H1 (cell line): ENCODE measurements at regions of chr14 and their contacts with region 1.

Region 1: DNA sequence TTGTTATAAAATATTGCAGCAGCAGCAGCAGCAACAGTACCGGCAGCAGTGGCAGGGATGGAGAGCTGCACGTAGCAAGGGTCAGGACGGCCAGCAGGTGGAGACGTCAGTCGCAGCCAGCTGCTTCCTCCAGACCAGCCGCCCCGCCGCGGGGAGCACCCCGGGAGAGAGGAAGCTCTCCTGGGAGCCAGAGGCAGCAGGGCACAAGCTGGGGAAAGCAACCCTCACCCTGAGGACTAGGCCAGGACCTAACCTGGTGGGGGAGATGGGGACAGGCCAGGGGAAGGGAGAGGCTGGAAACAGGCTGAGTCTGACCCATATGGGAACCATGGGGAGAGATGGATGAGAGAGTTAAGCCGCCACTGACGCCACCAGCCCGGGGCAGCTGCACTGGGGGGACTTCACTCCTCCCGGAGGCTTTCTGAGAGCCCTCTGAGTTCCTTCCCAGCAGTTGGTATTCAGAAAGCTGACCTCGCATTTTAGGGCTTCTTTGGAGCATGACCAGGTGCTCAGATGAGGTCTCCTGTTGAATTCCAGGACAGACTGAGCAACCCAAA is 56.3 kb downstream of the SPTB start:
- DNase-seq: peak; percentile 41 to 86
- H3K4me3 ChIP-seq: no peak overlapping the region
- H3K27ac ChIP-seq: no peak overlapping the region
- H3K4me1 ChIP-seq: peaks cover 0 to 13% (median 5%) of the 10 kb centered on the region in 4 experiments; a peak in 4 of 7 replicates
- H3K27me3 ChIP-seq: no peaks in the 10 kb centered on the region; a peak in 1 of 7 replicates
- CTCF ChIP-seq: peak; percentile 78 to 98 (median 82)
- EP300 ChIP-seq: no peak
- POLR2A ChIP-seq: no peak
- RAD21 ChIP-seq: peak; percentile 83 to 85

Region 2: DNA sequence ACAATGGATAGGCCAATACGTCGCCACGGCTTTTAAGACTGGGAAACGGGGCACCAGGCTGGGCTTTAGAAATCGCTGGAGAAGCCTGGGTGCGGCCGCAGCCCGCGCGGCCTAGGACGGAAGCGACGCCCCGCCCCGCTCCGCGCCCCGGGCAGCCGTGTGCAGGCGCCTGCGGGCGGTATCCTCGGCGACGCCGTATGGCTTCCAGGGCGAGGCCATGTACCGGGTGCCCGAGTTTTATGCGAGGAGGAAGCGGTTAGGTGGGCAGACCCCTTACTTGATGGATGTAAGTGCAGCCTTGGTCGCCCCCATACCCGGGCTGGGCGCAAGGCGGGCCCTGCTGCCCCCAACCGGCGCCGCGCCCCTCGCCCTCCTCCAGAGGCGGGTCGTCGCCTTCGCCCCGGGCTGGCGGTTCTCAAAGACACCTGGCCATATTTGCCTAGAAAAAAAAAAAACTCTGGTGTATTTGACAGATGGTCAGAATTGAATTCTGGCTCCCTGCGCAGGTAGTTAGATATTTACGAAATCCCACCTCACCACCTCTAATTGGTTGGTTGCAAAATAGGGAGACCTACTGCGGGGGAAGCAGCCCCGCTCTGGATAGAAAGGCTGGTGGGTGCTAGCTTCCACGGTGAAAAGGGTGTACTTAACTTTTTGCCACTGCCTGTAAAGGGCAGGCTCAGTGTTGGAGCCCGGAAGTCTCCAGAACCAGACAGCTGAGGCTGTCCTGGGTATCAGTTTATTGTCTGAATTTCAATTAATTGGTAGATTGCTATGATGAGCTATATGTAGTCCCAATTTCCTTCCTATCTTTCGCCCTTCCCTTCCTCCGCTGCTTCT is 273.4 kb before region 1 on chr14 and contains the start of gene PPP1R36:
- CTCF ChIA-PET with region 1: no interaction called
- POLR2A ChIA-PET with region 1: no interaction called
- DNase-seq: peak in 1 of 2 experiments; percentile 74
- H3K4me3 ChIP-seq: peak within 1 kb of the TSS; percentile 35 to 64 (median 46); a peak in 7 of 8 replicates
- H3K27ac ChIP-seq: no peak within 1 kb of the TSS
- H3K4me1 ChIP-seq: peaks cover 0 to 10% (median 4%) of the 10 kb centered on the region in 4 experiments; a peak in 6 of 7 replicates
- H3K27me3 ChIP-seq: peaks cover 1 to 10% (median 7%) of the 10 kb centered on the region in 4 experiments; a peak in 6 of 7 replicates
- CTCF ChIP-seq: no peak
- EP300 ChIP-seq: no peak
- POLR2A ChIP-seq: peak in 1 of 2 experiments; percentile 39; a peak in 1 of 3 replicates
- RAD21 ChIP-seq: 0 out of 4 replicates have a peak, but pooled peaks of 1 of the 2 experiments have one; percentile 1
- total RNA-seq, gene PPP1R36: 0.61 and 0.93 TPM in 2 replicates

Region 3: GRCh38 chr14:64752909-64753308 is 70.5 kb before region 1 on chr14:
- CTCF ChIA-PET with region 1: no interaction called
- POLR2A ChIA-PET with region 1: no interaction called
- DNase-seq: no peak
- H3K4me3 ChIP-seq: no peak overlapping the region
- H3K27ac ChIP-seq: no peak overlapping the region
- H3K4me1 ChIP-seq: peaks cover 0 to 4% (median 2%) of the 10 kb centered on the region in 4 experiments; a peak in 5 of 7 replicates
- H3K27me3 ChIP-seq: no peaks in the 10 kb centered on the region; a peak in 1 of 7 replicates
- CTCF ChIP-seq: no peak
- EP300 ChIP-seq: no peak
- POLR2A ChIP-seq: peak in 1 of 2 experiments; percentile 52; a peak in 2 of 3 replicates
- RAD21 ChIP-seq: no peak

Region 4: GRCh38 chr14:64800000-64800399 is 23.4 kb before region 1 on chr14:
- CTCF ChIA-PET with region 1: interaction called, 96 read pairs
- POLR2A ChIA-PET with region 1: no interaction called
- DNase-seq: no peak
- H3K4me3 ChIP-seq: no peak overlapping the region
- H3K27ac ChIP-seq: no peak overlapping the region
- H3K4me1 ChIP-seq: no peaks in the 10 kb centered on the region
- H3K27me3 ChIP-seq: no peaks in the 10 kb centered on the region
- CTCF ChIP-seq: peak; percentile 47 to 53 (median 51)
- EP300 ChIP-seq: no peak
- POLR2A ChIP-seq: no peak
- RAD21 ChIP-seq: peak; percentile 10 to 37; a peak in 1 of 4 replicates

Region 5: DNA sequence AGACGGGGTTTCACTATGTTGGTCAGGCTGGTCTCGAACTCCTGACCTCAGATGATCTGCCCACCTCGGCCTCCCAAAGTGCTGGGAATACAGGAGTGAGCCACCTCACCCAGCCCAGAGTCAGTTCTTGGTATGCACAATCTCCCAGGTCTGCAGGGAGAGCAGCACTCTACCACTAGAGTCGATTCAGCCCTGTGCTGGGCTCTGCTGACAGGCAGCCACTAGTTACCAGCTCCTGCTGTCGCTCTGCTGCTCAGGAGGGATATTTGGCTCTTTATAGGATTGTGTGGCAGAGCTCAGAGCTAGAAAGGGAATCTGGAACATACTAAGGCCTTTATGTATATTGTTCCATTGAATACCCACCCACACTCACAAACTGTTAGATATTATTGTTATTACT is 12.0 kb after region 1 on chr14:
- CTCF ChIA-PET with region 1: interaction called, 50 read pairs
- POLR2A ChIA-PET with region 1: interaction called, 3 read pairs
- DNase-seq: no peak
- H3K4me3 ChIP-seq: no peak overlapping the region
- H3K27ac ChIP-seq: no peak overlapping the region
- H3K4me1 ChIP-seq: peaks cover 0 to 5% (median 2%) of the 10 kb centered on the region in 4 experiments; a peak in 4 of 7 replicates
- H3K27me3 ChIP-seq: no peaks in the 10 kb centered on the region
- CTCF ChIP-seq: no peak
- EP300 ChIP-seq: no peak
- POLR2A ChIP-seq: no peak
- RAD21 ChIP-seq: no peak

Region 6: DNA sequence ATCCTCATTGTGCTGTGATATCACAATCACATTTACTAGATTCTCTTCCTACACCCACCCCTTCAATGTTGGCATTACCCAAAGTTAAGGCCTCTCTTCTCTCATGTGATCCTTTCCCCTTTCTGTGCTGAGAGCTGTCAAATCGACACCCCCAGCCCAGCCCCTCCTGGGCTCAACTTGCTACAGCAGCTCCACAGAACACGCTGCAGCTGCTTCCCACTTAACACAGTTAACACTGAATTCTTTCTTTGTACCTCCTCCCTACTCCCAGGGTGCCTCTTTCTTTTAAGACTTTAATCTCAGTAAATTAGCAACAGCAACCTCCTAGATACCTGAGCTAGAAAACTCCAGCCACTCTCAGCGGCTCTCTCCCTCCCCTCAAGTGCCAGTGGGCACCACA is 38.5 kb after region 1 on chr14:
- CTCF ChIA-PET with region 1: interaction called, 36 read pairs
- POLR2A ChIA-PET with region 1: no interaction called
- DNase-seq: no peak
- H3K4me3 ChIP-seq: no peak overlapping the region
- H3K27ac ChIP-seq: no peak overlapping the region
- H3K4me1 ChIP-seq: peaks cover 6 to 22% (median 10%) of the 10 kb centered on the region in 4 experiments; a peak in 5 of 7 replicates
- H3K27me3 ChIP-seq: no peaks in the 10 kb centered on the region; a peak in 1 of 7 replicates
- CTCF ChIP-seq: no peak
- EP300 ChIP-seq: no peak
- POLR2A ChIP-seq: no peak
- RAD21 ChIP-seq: no peak

Region 7: DNA sequence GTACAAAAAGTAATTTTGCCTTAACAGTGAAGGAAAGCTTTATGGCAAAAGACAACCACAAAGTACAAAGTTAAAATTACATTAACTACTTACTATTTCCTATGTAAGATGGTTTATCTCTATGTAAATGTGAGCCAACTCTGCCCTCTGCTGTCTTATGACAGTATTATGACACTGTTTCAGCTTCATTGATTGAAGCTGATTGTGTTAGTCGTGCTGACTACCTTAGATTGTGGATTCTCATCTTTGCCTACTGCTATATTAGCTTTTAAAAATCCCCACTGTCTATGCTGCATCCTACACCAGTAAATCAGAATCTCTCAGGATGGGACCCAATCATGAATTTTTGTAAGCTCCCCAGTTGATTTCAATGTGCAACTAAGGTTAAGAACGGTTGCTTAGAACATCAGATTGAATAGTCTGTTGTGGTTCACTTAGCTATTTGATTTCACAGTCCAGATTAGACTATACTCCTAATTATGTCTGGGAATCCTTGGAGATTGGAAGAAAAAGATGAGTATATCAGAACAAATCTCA is 68.5 kb after region 1 on chr14:
- CTCF ChIA-PET with region 1: interaction called, 243 read pairs
- POLR2A ChIA-PET with region 1: interaction called, 4 read pairs
- DNase-seq: no peak
- H3K4me3 ChIP-seq: no peak overlapping the region
- H3K27ac ChIP-seq: no peak overlapping the region
- H3K4me1 ChIP-seq: no peaks in the 10 kb centered on the region
- H3K27me3 ChIP-seq: no peaks in the 10 kb centered on the region
- CTCF ChIP-seq: peak in 2 of 3 experiments; percentile 59 to 64; a peak in 2 of 4 replicates
- EP300 ChIP-seq: no peak
- POLR2A ChIP-seq: no peak
- RAD21 ChIP-seq: peak; percentile 80 to 90

Region 8: GRCh38 chr14:64937171-64937820 is 113.9 kb after region 1 on chr14:
- CTCF ChIA-PET with region 1: interaction called, 14 read pairs
- POLR2A ChIA-PET with region 1: no interaction called
- DNase-seq: no peak
- H3K4me3 ChIP-seq: no peak overlapping the region
- H3K27ac ChIP-seq: no peak overlapping the region
- H3K4me1 ChIP-seq: peaks cover 0 to under 1% (median 0%) of the 10 kb centered on the region in 4 experiments; a peak in 1 of 7 replicates
- H3K27me3 ChIP-seq: no peaks in the 10 kb centered on the region
- CTCF ChIP-seq: no peak
- EP300 ChIP-seq: no peak
- POLR2A ChIP-seq: no peak
- RAD21 ChIP-seq: no peak

Region 9: GRCh38 chr14:64993266-64993930 is 170.0 kb after region 1 on chr14:
- CTCF ChIA-PET with region 1: no interaction called
- POLR2A ChIA-PET with region 1: no interaction called
- DNase-seq: no peak
- H3K4me3 ChIP-seq: no peak overlapping the region
- H3K27ac ChIP-seq: no peak overlapping the region
- H3K4me1 ChIP-seq: no peaks in the 10 kb centered on the region; a peak in 1 of 7 replicates
- H3K27me3 ChIP-seq: no peaks in the 10 kb centered on the region
- CTCF ChIP-seq: no peak
- EP300 ChIP-seq: no peak
- POLR2A ChIP-seq: no peak
- RAD21 ChIP-seq: no peak

Region 10: GRCh38 chr14:65184032-65184764 is 360.8 kb after region 1 on chr14:
- CTCF ChIA-PET with region 1: no interaction called
- POLR2A ChIA-PET with region 1: no interaction called
- DNase-seq: no peak
- H3K4me3 ChIP-seq: no peak overlapping the region
- H3K27ac ChIP-seq: no peak overlapping the region
- H3K4me1 ChIP-seq: peaks cover 3 to 20% (median 11%) of the 10 kb centered on the region in 4 experiments
- H3K27me3 ChIP-seq: no peaks in the 10 kb centered on the region; a peak in 2 of 7 replicates
- CTCF ChIP-seq: no peak
- EP300 ChIP-seq: no peak
- POLR2A ChIP-seq: no peak
- RAD21 ChIP-seq: no peak